GM13977 (cell line): ENCODE measurements at regions of chr7 and their contacts with region 1.

Region 1: GRCh38 chr7:23055582-23056178 is 41.8 kb upstream of the HYCC1 start:
- DNase-seq: peak; percentile 67
- CTCF ChIP-seq: peak; percentile 88

Region 2: DNA sequence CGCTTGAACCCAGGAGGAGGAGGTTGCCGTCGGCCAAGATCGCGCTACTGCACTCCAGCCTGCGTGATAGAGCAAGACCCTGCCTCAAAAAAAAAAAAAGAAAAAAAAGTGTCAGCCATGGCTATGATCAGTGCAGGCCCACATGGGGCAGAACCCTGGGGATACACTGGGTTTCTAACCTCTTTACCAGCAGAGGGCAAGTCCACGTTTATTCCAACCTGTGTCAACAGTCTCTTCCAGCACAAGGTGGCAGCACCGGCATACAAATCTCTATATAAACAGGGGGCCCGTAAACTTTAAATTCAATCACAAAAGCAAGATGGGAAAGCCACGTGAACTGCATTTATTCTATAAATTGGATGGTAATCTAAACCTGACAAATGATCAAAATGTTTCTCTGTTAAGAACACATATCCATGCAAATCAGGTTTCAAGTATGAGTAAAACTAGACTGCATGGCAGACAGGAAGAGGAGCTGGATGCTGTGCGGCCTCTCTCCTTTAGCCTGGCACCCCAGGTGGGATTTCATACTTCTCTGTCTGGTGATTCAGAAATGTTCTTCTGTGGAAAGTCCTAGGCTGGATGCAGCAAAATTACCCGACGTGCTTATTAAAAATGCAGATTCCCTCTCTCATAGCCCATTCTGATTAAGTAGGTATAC is 495.7 kb before region 1 on chr7:
- in situ Hi-C with region 1: loop called (anchors 10 kb)
- DNase-seq: peak; percentile 72
- CTCF ChIP-seq: peak; percentile 85

Region 3: DNA sequence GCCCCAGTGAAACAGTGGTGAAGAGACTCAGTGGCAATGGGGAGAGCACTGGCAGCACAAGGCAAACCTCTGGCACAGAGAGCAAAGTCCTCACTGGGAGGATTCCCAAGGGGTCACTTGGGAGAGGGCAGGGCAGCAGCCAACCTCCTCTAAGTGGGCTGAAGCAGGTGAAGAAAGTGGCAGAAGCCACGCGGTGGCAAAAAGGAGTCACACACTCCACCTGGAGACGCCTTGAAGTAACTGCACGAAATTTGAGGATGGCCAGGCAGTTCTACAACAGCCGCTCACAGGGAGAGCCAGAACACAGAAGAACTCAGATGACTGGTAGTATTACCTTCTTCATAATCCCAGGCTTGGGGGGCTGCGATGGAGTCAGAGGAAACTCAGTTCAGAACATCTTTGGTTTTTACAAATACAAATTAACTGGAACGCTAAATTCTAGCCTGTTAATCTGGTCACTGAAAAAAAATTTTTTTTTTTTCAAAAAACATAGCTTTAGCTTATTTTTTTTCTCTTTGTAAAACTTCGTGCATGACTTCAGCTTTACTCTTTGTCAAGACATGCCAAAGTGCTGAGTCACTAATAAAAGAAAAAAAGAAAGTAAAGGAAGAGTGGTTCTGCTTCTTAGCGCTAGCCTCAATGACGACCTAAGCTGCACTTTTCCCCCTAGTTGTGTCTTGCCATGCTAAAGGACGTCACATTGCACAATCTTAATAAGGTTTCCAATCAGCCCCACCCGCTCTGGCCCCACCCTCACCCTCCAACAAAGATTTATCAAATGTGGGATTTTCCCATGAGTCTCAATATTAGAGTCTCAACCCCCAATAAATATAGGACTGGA is 329.1 kb before region 1 on chr7:
- in situ Hi-C with region 1: loop called (anchors 25 kb)
- DNase-seq: peak; percentile 80
- CTCF ChIP-seq: peak; percentile 90

Region 4: GRCh38 chr7:22822486-22823141 is 233.1 kb before region 1 on chr7 and contains the start of gene TOMM7:
- in situ Hi-C with region 1: no loop called
- DNase-seq: peak; percentile 96
- CTCF ChIP-seq: peak; percentile 52

Region 5: DNA sequence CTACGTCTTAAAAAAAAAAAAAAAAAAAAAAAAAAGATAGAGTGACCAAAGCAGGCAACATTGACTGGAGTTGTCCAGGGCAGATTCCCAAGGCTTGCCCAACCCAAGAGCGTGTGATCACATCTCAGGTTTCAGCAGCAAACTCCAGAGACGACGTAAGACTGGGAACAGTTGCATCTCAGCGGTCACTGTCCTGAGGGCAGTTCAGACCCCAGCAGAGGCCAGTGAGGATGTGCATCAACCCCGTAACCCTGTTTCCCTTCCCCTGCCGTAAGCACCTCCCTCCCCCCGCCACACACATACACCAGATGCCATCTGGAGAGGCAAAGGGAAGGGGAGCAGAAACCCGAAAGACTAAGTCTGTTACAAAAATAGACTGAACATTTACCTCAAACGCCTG is 213.7 kb before region 1 on chr7:
- in situ Hi-C with region 1: loop called (anchors 10 kb)
- DNase-seq: no peak
- CTCF ChIP-seq: no peak